ENCODE measurements at regions of chr7 and their contacts with region 1.

Region 1: GRCh38 chr7:26090927-26091519 is 61.0 kb upstream of the NFE2L3 start:
- DNase-seq: peak; percentile 15
- H3K4me3 Mint-ChIP-seq: no peak overlapping the region
- H3K27ac Mint-ChIP-seq: no peak overlapping the region
- H3K4me1 Mint-ChIP-seq: peaks cover 19% of the 10 kb centered on the region
- H3K27me3 Mint-ChIP-seq: no peaks in the 10 kb centered on the region

Region 2: DNA sequence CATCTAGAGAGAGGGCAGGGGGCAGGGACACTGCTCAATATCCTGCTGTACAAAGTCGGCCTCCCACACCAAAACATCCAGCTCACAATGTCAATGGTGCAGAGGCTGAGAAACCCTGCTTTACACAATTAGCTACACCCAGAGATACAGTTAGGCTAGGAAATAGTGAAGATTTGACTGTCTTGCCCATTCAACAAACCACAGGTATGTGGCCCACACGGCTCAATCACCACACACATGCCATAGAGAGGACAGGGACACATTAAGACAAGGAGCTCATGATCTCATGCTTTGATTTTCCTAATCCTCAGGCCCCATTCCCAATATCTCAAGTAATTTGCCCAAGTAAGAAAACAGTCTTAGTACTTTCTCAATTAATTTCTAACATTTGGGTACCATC is 1221.5 kb before region 1 on chr7:
- CTCF ChIA-PET with region 1: no interaction called
- intact Hi-C with region 1: no loop called
- DNase-seq: no peak
- H3K4me3 Mint-ChIP-seq: no peak overlapping the region
- H3K27ac Mint-ChIP-seq: no peak overlapping the region
- H3K4me1 Mint-ChIP-seq: peaks cover 21% of the 10 kb centered on the region
- H3K27me3 Mint-ChIP-seq: no peaks in the 10 kb centered on the region

Region 3: DNA sequence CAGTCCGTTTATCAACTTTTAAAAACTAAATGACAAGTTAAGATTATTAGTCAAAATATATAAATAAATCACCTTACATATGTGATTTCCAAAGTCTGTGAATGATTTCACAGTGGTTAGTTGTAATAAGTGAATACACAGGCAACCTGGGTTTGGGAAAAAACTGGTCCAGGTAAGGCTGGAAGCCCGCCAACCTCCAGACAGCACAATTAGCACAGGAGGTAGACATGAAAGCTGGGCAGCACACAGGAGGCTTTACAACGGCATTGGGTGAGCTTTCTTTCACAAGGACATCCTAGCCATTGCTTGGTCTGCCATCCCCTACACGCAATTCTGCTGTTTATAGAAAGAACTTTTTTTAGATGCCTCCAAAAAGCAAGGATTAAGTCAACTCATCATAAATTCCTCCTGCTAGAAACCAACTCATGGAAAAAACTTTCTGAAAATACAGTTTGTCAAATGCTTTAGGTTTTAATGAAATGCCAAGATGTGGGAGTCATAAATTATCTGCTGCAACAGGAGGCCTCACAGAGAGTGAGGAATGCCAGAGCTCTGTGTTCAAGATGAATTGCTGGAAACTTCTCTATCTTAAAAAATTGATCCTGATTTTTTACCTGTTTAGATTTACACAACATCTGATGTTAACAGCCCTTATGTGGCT is 285.9 kb before region 1 on chr7:
- CTCF ChIA-PET with region 1: no interaction called
- intact Hi-C with region 1: no loop called
- DNase-seq: no peak
- H3K4me3 Mint-ChIP-seq: no peak overlapping the region
- H3K27ac Mint-ChIP-seq: no peak overlapping the region
- H3K4me1 Mint-ChIP-seq: peaks cover 19% of the 10 kb centered on the region
- H3K27me3 Mint-ChIP-seq: peaks cover 3% of the 10 kb centered on the region

Region 4: DNA sequence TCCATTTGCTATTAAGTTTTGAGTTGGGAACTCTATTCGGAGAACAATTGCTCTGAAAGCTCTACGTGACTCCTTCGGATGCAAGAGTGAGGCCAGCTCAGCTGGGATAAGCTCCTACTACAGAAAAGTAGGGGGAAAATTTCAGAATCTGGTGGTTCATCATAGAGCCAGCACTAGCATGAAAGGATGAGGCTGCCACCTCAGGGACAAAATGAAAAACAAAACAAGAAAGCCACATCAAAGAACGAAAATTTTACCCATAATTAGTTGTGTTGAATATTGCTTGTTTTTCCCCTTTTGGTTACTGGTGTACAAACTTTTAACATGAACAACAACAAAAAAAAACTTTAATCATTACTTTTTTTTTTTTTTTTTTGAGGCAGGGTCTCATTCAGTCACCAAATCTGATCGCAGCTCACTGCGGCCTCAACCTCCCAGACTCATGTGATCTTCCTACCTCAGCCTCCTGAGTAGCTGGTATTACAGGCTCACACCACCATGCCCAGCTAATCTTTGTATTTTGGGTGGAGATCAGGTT is 21.2 kb after region 1 on chr7:
- CTCF ChIA-PET with region 1: interaction called, 12 read pairs
- intact Hi-C with region 1: loop called (anchors 2 kb)
- DNase-seq: no peak
- H3K4me3 Mint-ChIP-seq: no peak overlapping the region
- H3K27ac Mint-ChIP-seq: no peak overlapping the region
- H3K4me1 Mint-ChIP-seq: peaks cover 8% of the 10 kb centered on the region
- H3K27me3 Mint-ChIP-seq: no peaks in the 10 kb centered on the region

Region 5: DNA sequence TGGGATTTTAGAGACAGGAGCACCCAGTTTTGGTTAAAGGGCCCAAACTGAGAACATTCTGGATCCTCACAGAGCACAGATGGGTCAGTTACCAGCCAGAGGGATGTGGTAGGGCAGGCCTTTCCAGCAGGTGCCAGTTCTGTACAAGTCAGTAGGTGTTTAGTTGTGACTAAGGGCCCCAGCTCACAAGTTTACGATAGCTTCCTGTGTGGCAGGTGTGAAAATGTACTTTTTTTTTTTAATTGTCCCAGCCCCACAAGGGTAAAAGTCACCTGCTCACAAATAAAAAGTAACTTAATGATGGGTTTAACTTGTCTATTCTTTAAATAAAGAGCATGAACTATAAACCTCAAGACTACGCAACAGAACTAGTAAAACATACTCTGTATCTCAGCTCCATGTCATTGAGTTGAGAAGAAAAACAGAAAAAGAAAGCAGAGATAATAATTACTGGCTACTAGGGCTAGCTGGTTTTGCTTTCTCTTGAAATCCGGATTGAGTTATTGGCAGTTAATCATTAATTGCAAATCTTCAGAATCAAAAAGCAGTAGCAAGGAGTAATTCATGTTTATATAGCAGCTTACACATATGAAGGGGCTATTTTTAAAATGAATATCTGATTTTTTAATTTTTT is 76.4 kb after region 1 on chr7:
- CTCF ChIA-PET with region 1: interaction called, 23 read pairs
- intact Hi-C with region 1: loop called (anchors 2 kb)
- DNase-seq: peak; percentile 79
- H3K4me3 Mint-ChIP-seq: peak overlapping the region; percentile 23
- H3K27ac Mint-ChIP-seq: peak overlapping the region; percentile 94
- H3K4me1 Mint-ChIP-seq: peaks cover 40% of the 10 kb centered on the region
- H3K27me3 Mint-ChIP-seq: no peaks in the 10 kb centered on the region

Region 6: GRCh38 chr7:26193432-26194207 is 102.6 kb after region 1 on chr7:
- CTCF ChIA-PET with region 1: interaction called, 35 read pairs
- intact Hi-C with region 1: loop called (anchors 1 kb)
- DNase-seq: no peak
- H3K4me3 Mint-ChIP-seq: peak overlapping the region; percentile 60
- H3K27ac Mint-ChIP-seq: peak overlapping the region; percentile 90
- H3K4me1 Mint-ChIP-seq: peaks cover 78% of the 10 kb centered on the region
- H3K27me3 Mint-ChIP-seq: no peaks in the 10 kb centered on the region

Region 7: GRCh38 chr7:26667500-26668133 is 576.6 kb after region 1 on chr7:
- CTCF ChIA-PET with region 1: no interaction called
- intact Hi-C with region 1: loop called (anchors 5 kb)
- DNase-seq: peak; percentile 78
- H3K4me3 Mint-ChIP-seq: no peak overlapping the region
- H3K27ac Mint-ChIP-seq: no peak overlapping the region
- H3K4me1 Mint-ChIP-seq: peaks cover 19% of the 10 kb centered on the region
- H3K27me3 Mint-ChIP-seq: peaks cover 4% of the 10 kb centered on the region